Heart right ventricle (tissue), 16 donors: ENCODE measurements at regions of chr1 and their contacts with region 1.

Region 1: GRCh38 chr1:22673486-22674409 is 20.7 kb downstream of the C1QB start:
- DNase-seq: peak; percentile 16 to 45
- ATAC-seq: peak in 2 of 8 donors; percentile 7 to 36
- H3K4me3 ChIP-seq: no peak overlapping the region
- H3K27ac ChIP-seq: no peak overlapping the region
- H3K4me1 ChIP-seq: no peaks in the 10 kb centered on the region
- H3K27me3 ChIP-seq: peaks cover 0 to 82% (median 59%) of the 10 kb centered on the region in 7 donors
- CTCF ChIP-seq: peak; percentile 23 to 73 (median 65)

Region 2: GRCh38 chr1:22388671-22389450 is 284.9 kb before region 1 on chr1:
- intact Hi-C with region 1: no loop called
- DNase-seq: no peak
- ATAC-seq: no peak
- H3K4me3 ChIP-seq: no peak overlapping the region
- H3K27ac ChIP-seq: no peak overlapping the region
- H3K4me1 ChIP-seq: no peaks in the 10 kb centered on the region
- H3K27me3 ChIP-seq: peaks cover 0 to 71% (median 35%) of the 10 kb centered on the region in 7 donors
- CTCF ChIP-seq: no peak

Region 3: GRCh38 chr1:22709891-22710700 is 36.3 kb after region 1 on chr1:
- intact Hi-C with region 1: no loop called
- DNase-seq: peak; percentile 41 to 70
- ATAC-seq: peak in 7 of 8 donors; percentile 25 to 54 (median 43)
- H3K4me3 ChIP-seq: peak overlapping the region in 9 of 10 donors; percentile 31 to 52 (median 47)
- H3K27ac ChIP-seq: peak overlapping the region in 1 of 10 donors; percentile 6
- H3K4me1 ChIP-seq: peaks cover 0 to 38% (median 8%) of the 10 kb centered on the region in 9 donors
- H3K27me3 ChIP-seq: peaks cover 0 to 54% (median 40%) of the 10 kb centered on the region in 7 donors
- CTCF ChIP-seq: no peak

Region 4: GRCh38 chr1:22922640-22923039 is 248.9 kb after region 1 on chr1:
- intact Hi-C with region 1: loop called in 2 of 10 experiments (anchors 10 kb)
- DNase-seq: no peak
- ATAC-seq: no peak
- H3K4me3 ChIP-seq: no peak overlapping the region
- H3K27ac ChIP-seq: no peak overlapping the region
- H3K4me1 ChIP-seq: peaks cover 0 to 13% (median 8%) of the 10 kb centered on the region in 9 donors
- H3K27me3 ChIP-seq: peaks cover 0 to 28% (median 4%) of the 10 kb centered on the region in 7 donors
- CTCF ChIP-seq: no peak

Region 5: GRCh38 chr1:22930235-22930912 is 256.6 kb after region 1 on chr1:
- intact Hi-C with region 1: loop called in 7 of 10 experiments (anchors 1 to 10 kb)
- DNase-seq: peak; percentile 25 to 48
- ATAC-seq: peak; percentile 20 to 80 (median 72)
- H3K4me3 ChIP-seq: no peak overlapping the region
- H3K27ac ChIP-seq: no peak overlapping the region
- H3K4me1 ChIP-seq: no peaks in the 10 kb centered on the region
- H3K27me3 ChIP-seq: peaks cover 0 to 40% (median 12%) of the 10 kb centered on the region in 7 donors
- CTCF ChIP-seq: peak in 8 of 9 donors; percentile 61 to 76 (median 70)